ENCODE measurements at regions of chr6 and their contacts with region 1.

Region 1: GRCh38 chr6:135909737-135910387 is 58.4 kb downstream of the PDE7B start:
- DNase-seq: peak; percentile 73
- ATAC-seq: peak; percentile 88
- H3K4me3 Mint-ChIP-seq: no peak overlapping the region
- H3K27ac Mint-ChIP-seq: no peak overlapping the region
- H3K4me1 Mint-ChIP-seq: peaks cover 5% of the 10 kb centered on the region
- H3K27me3 Mint-ChIP-seq: no peaks in the 10 kb centered on the region

Region 2: GRCh38 chr6:135506270-135506997 is 403.4 kb before region 1 on chr6:
- CTCF ChIA-PET with region 1: interaction called, 11 read pairs
- DNase-seq: no peak
- ATAC-seq: peak; percentile 90
- H3K4me3 Mint-ChIP-seq: no peak overlapping the region
- H3K27ac Mint-ChIP-seq: peak overlapping the region; percentile 59
- H3K4me1 Mint-ChIP-seq: peaks cover 12% of the 10 kb centered on the region
- H3K27me3 Mint-ChIP-seq: no peaks in the 10 kb centered on the region

Region 3: GRCh38 chr6:135675862-135676261 is 234.0 kb before region 1 on chr6:
- CTCF ChIA-PET with region 1: interaction called, 14 read pairs
- DNase-seq: peak; percentile 47
- ATAC-seq: peak; percentile 68
- H3K4me3 Mint-ChIP-seq: no peak overlapping the region
- H3K27ac Mint-ChIP-seq: no peak overlapping the region
- H3K4me1 Mint-ChIP-seq: peaks cover 16% of the 10 kb centered on the region
- H3K27me3 Mint-ChIP-seq: no peaks in the 10 kb centered on the region

Measured in activated CD8-positive, alpha-beta memory T cell treated with anti-CD3 and anti-CD28 coated beads, Interleukin-2, amount 10 ng/mL, durations not matched to agents 7 days and 5 days (primary cell).